T-cell (primary cell): ENCODE measurements at regions of chr11 and their contacts with region 1.

Region 1: GRCh38 chr11:18105802-18106574 is at the start of gene SAAL1:
- DNase-seq: peak; percentile 67 to 92 (median 84)
- ATAC-seq: peak; percentile 98 to 99 (median 98)
- H3K4me3 ChIP-seq: peak within 1 kb of the TSS; percentile 87 to 92
- H3K4me3 Mint-ChIP-seq: peak within 1 kb of the TSS; percentile 90 to 95 (median 92)
- H3K27ac ChIP-seq: peak within 1 kb of the TSS; percentile 58
- H3K27ac Mint-ChIP-seq: peak within 1 kb of the TSS; percentile 63 to 87
- H3K4me1 ChIP-seq: peaks cover 3 to 13% of the 10 kb centered on the region in 2 experiments
- H3K4me1 Mint-ChIP-seq: peaks cover 37 to 43% (median 40%) of the 10 kb centered on the region in 3 donors
- H3K27me3 ChIP-seq: no peaks in the 10 kb centered on the region
- H3K27me3 Mint-ChIP-seq: peaks cover 0 to 8% of the 10 kb centered on the region in 2 donors
- total RNA-seq, gene SAAL1: 17.2 to 22.5 (median 18.8) TPM

Region 2: GRCh38 chr11:18075444-18075843 is 30.5 kb before region 1 on chr11:
- CTCF ChIA-PET with region 1: no interaction called
- POLR2A ChIA-PET with region 1: no interaction called
- DNase-seq: no peak
- ATAC-seq: no peak
- H3K4me3 ChIP-seq: no peak overlapping the region
- H3K4me3 Mint-ChIP-seq: no peak overlapping the region
- H3K27ac ChIP-seq: no peak overlapping the region
- H3K27ac Mint-ChIP-seq: no peak overlapping the region
- H3K4me1 ChIP-seq: no peaks in the 10 kb centered on the region
- H3K4me1 Mint-ChIP-seq: no peaks in the 10 kb centered on the region
- H3K27me3 ChIP-seq: no peaks in the 10 kb centered on the region
- H3K27me3 Mint-ChIP-seq: no peaks in the 10 kb centered on the region

Region 3: GRCh38 chr11:18093959-18094358 is 12.0 kb before region 1 on chr11:
- CTCF ChIA-PET with region 1: interaction called, 4 to 10 read pairs
- POLR2A ChIA-PET with region 1: no interaction called
- DNase-seq: no peak
- ATAC-seq: no peak
- H3K4me3 ChIP-seq: no peak overlapping the region
- H3K4me3 Mint-ChIP-seq: no peak overlapping the region
- H3K27ac ChIP-seq: no peak overlapping the region
- H3K27ac Mint-ChIP-seq: no peak overlapping the region
- H3K4me1 ChIP-seq: no peaks in the 10 kb centered on the region
- H3K4me1 Mint-ChIP-seq: peaks cover 0 to 6% (median 3%) of the 10 kb centered on the region in 3 donors
- H3K27me3 ChIP-seq: no peaks in the 10 kb centered on the region
- H3K27me3 Mint-ChIP-seq: no peaks in the 10 kb centered on the region

Region 4: GRCh38 chr11:18229501-18229900 is 123.5 kb after region 1 on chr11:
- CTCF ChIA-PET with region 1: no interaction called
- POLR2A ChIA-PET with region 1: no interaction called
- DNase-seq: no peak
- ATAC-seq: no peak
- H3K4me3 ChIP-seq: no peak overlapping the region
- H3K4me3 Mint-ChIP-seq: no peak overlapping the region
- H3K27ac ChIP-seq: no peak overlapping the region
- H3K27ac Mint-ChIP-seq: no peak overlapping the region
- H3K4me1 ChIP-seq: no peaks in the 10 kb centered on the region
- H3K4me1 Mint-ChIP-seq: no peaks in the 10 kb centered on the region
- H3K27me3 ChIP-seq: peaks cover 0 to 7% of the 10 kb centered on the region in 2 experiments
- H3K27me3 Mint-ChIP-seq: peaks cover 6 to 16% of the 10 kb centered on the region in 2 donors

Region 5: DNA sequence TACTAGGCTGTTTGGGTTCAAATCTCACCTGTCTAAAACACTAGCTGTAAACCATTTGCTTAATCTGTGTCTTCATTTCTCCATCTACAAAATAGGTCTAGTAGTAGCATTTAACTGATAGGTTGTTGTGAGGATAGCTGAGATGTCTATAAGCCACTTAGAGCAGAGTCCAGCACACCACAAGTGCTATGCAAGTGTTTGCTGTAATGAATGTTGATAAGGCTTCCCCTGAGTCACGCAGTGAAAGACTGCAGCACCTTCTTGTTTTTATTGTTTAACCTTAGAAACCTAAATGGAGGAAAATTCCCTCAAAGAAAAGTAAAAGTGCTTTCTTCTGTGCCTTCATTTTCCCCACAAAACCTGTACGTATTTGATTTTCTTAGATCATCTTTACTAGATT is 265.3 kb after region 1 on chr11:
- CTCF ChIA-PET with region 1: no interaction called
- POLR2A ChIA-PET with region 1: no interaction called
- DNase-seq: no peak
- ATAC-seq: no peak
- H3K4me3 ChIP-seq: no peak overlapping the region
- H3K4me3 Mint-ChIP-seq: no peak overlapping the region
- H3K27ac ChIP-seq: no peak overlapping the region
- H3K27ac Mint-ChIP-seq: no peak overlapping the region
- H3K4me1 ChIP-seq: peaks cover 0 to under 1% of the 10 kb centered on the region in 2 experiments
- H3K4me1 Mint-ChIP-seq: peaks cover 2 to 14% (median 9%) of the 10 kb centered on the region in 3 donors
- H3K27me3 ChIP-seq: no peaks in the 10 kb centered on the region
- H3K27me3 Mint-ChIP-seq: no peaks in the 10 kb centered on the region